ENCODE measurements at regions of chr12 and their contacts with region 1.

Region 1: GRCh38 chr12:130335517-130336392 is 1.9 kb upstream of the PIWIL1 start:
- DNase-seq: peak; percentile 50
- H3K4me3 Mint-ChIP-seq: no peak overlapping the region
- H3K27ac Mint-ChIP-seq: no peak overlapping the region
- H3K4me1 Mint-ChIP-seq: peaks cover 9% of the 10 kb centered on the region
- H3K27me3 Mint-ChIP-seq: no peaks in the 10 kb centered on the region
- CTCF ChIP-seq: no peak

Region 2: DNA sequence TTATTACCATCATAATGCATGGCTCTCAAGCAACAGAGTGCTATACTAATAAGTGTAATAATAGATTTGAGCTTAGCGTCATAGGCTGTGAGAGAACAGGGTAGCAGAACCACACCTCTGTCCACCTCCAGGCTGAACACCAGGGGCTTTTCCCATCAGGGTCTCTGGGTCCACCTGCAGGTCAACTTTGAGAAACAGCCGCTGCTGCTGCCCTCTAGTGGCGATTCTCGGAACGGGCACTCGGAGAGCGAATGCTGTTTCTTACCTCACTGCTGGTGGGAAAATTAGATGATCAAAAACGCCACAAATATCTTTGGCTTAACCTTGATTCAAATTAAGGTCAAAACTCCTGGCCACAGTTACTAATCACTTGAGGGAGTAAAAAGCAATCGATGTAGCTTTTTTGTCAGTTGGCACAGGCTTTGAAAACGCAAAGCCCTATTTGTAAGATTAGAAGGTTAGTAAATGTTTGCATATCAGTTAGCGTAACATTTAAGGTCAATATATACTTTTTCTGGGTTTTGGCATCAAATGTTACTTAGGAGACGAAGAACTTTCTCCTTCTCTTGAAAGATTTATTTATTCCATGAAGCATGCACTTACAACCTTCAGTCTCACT is 304.1 kb before region 1 on chr12:
- CTCF ChIA-PET with region 1: no interaction called
- intact Hi-C with region 1: loop called (anchors 1 kb)
- DNase-seq: peak; percentile 65
- H3K4me3 Mint-ChIP-seq: no peak overlapping the region
- H3K27ac Mint-ChIP-seq: no peak overlapping the region
- H3K4me1 Mint-ChIP-seq: no peaks in the 10 kb centered on the region
- H3K27me3 Mint-ChIP-seq: no peaks in the 10 kb centered on the region
- CTCF ChIP-seq: peak; percentile 61

Region 3: DNA sequence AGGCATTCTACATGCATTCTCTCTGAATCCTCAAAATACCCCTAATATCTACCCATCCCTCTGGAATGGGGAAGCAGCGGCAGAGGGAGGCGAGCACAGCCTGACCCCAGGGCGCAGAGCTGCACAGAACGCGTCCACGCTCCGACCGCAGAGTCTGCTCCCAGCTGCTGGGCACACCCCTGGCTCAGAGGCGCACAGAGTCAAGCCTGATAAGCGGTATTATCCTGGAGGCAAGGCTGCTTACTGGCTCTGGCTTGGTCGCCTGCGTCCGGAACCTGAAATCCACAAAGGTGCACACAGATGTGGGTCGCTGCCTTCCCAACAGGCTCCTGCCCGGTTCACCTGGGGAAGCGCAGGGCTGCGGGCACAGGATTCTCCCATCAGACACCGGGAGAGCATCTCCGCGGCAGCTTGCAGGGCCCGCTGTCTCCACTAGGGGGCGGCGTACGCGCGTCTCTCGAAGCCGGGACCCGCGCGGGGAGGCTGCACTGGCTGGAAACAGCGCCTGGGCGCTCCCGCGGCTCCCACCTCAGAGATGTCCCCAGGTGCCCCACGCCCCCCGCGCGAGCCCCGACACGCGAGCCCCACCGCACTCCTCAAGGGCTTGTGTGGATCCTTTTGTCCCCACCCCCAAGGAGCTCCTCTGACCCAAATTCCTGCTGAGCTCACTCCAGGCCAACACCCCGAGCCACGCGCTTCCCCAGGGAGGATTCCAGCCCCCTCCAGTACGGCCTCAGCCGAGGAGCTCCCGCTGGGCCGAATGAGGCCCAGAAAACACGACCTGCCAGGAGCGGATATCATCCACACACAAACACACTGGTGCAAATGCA is 293.6 kb before region 1 on chr12:
- CTCF ChIA-PET with region 1: no interaction called
- intact Hi-C with region 1: loop called (anchors 1 kb)
- DNase-seq: no peak
- H3K4me3 Mint-ChIP-seq: no peak overlapping the region
- H3K27ac Mint-ChIP-seq: no peak overlapping the region
- H3K4me1 Mint-ChIP-seq: no peaks in the 10 kb centered on the region
- H3K27me3 Mint-ChIP-seq: no peaks in the 10 kb centered on the region
- CTCF ChIP-seq: peak; percentile 28

Region 4: DNA sequence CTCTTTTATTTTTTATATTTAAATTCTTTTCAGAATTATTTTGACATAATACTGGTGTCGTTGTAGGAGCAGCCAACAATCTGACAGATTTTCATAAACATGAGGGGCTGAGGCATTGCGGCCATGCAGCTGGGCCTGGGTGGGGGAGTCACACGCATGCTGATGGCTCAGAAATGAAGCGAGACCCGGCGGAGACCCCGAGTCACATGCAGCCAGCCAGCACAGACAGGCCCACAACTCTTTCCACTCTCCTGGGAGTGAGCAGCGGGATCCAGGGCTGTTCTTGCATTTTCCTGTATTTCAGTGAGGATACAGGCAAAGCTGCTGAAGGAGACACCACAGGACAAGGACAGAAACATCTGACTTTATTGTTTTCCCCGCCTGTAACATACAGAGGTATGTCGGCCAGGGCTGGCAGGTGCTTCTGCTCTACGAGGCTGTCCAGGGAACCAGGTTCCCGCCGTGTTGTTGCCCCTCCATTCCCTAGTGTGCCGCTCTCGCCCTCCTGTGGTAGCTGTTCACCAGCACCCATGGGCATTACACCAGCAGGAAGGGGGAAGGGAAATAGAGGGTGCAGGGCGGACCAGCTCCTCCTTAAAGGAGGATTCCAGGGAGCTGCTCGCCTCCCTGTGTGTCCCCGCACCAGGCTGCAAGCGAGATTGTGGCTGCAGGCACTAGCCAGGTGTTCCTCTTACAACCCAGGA is 143.0 kb before region 1 on chr12:
- CTCF ChIA-PET with region 1: no interaction called
- intact Hi-C with region 1: no loop called
- DNase-seq: no peak
- H3K4me3 Mint-ChIP-seq: no peak overlapping the region
- H3K27ac Mint-ChIP-seq: no peak overlapping the region
- H3K4me1 Mint-ChIP-seq: no peaks in the 10 kb centered on the region
- H3K27me3 Mint-ChIP-seq: no peaks in the 10 kb centered on the region
- CTCF ChIP-seq: no peak

Region 5: GRCh38 chr12:130747867-130748740 is 412.3 kb after region 1 on chr12:
- CTCF ChIA-PET with region 1: no interaction called
- intact Hi-C with region 1: loop called (anchors 5 kb)
- DNase-seq: peak; percentile 85
- H3K4me3 Mint-ChIP-seq: no peak overlapping the region
- H3K27ac Mint-ChIP-seq: no peak overlapping the region
- H3K4me1 Mint-ChIP-seq: no peaks in the 10 kb centered on the region
- H3K27me3 Mint-ChIP-seq: peaks cover 26% of the 10 kb centered on the region
- CTCF ChIP-seq: peak; percentile 90

Measured in Calu3 (cell line).